GM13976 (cell line): ENCODE measurements at regions of chrX and their contacts with region 1.

Region 1: GRCh38 chrX:81195712-81196111 is 6.0 kb downstream of the HMGN5 start:
- DNase-seq: no peak
- CTCF ChIP-seq: peak; percentile 57

Region 2: GRCh38 chrX:80876877-80877276 is 318.8 kb before region 1 on chrX:
- in situ Hi-C with region 1: loop called (anchors 10 kb)
- DNase-seq: peak; percentile 29
- CTCF ChIP-seq: no peak

Region 3: GRCh38 chrX:81280148-81280547 is 84.4 kb after region 1 on chrX:
- in situ Hi-C with region 1: no loop called
- DNase-seq: no peak
- CTCF ChIP-seq: peak; percentile 13